ENCODE measurements at regions of chr22 and their contacts with region 1.

Region 1: DNA sequence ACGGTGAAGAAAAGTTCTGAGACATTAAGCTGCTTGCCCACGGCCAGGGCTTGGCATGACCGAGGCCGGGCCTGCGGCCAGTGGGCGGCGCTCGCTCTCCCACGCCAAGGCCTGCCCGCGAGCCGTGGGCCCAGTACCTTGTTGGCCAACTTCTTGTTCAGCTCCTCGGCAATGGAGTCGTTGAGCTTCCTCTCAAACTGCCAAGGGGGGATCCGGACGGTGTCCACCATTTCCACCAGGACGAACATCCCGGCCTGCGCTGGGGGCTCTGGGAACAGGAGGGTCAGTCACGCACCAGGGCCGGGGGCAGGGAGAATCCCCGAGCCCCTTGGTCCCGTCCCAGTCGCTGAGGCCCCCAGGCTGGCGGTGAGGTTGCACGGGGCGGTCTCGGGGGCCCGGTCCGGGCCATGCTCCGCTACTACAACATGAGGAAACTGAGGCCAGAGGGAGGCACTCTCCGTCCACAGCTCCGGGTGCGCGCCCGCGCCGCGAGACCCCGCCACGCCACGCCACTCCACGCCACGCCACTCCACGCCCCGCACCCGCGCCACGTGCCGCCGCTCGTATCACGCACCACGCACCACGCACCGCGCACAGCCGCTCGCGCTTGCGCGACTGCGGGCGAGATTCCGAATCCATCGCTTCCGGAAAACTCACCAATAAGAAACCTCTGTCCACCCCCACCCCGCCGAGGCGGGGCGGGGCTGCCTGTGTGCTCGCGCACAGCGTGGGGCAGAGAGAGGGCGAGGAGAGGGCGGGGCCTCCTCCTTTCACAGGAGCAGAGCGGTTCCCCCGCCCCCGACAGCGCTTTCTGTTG is at the start of gene POLR3H:
- DNase-seq: peak; percentile 96 to 98
- ATAC-seq: peak; percentile 91
- H3K4me3 ChIP-seq: peak within 1 kb of the TSS; percentile 78 to 90 (median 86)
- H3K27ac ChIP-seq: peak within 1 kb of the TSS; percentile 85 to 95 (median 88)
- H3K4me1 ChIP-seq: peaks cover 17 to 25% of the 10 kb centered on the region in 2 donors
- H3K27me3 ChIP-seq: no peaks in the 10 kb centered on the region
- CTCF ChIP-seq: peak; percentile 4 to 75 (median 49)
- POLR2A ChIP-seq: peak; percentile 66 to 69
- total RNA-seq, gene POLR3H: 5.7 to 11.0 (median 6.9) TPM

Region 2: GRCh38 chr22:41589391-41590241 is 45.6 kb after region 1 on chr22 and contains the start of gene PMM1:
- in situ Hi-C with region 1: no loop called
- intact Hi-C with region 1: loop called (anchors 1 kb)
- DNase-seq: peak; percentile 100
- ATAC-seq: peak; percentile 98 to 99
- H3K4me3 ChIP-seq: peak within 1 kb of the TSS; percentile 76 to 95 (median 94)
- H3K27ac ChIP-seq: peak within 1 kb of the TSS; percentile 70 to 88 (median 82)
- H3K4me1 ChIP-seq: peaks cover 0 to 17% of the 10 kb centered on the region in 2 donors
- H3K27me3 ChIP-seq: no peaks in the 10 kb centered on the region
- CTCF ChIP-seq: no peak
- POLR2A ChIP-seq: peak; percentile 84 to 92
- total RNA-seq, gene PMM1: 11.6 to 23.3 (median 16.5) TPM

Region 3: DNA sequence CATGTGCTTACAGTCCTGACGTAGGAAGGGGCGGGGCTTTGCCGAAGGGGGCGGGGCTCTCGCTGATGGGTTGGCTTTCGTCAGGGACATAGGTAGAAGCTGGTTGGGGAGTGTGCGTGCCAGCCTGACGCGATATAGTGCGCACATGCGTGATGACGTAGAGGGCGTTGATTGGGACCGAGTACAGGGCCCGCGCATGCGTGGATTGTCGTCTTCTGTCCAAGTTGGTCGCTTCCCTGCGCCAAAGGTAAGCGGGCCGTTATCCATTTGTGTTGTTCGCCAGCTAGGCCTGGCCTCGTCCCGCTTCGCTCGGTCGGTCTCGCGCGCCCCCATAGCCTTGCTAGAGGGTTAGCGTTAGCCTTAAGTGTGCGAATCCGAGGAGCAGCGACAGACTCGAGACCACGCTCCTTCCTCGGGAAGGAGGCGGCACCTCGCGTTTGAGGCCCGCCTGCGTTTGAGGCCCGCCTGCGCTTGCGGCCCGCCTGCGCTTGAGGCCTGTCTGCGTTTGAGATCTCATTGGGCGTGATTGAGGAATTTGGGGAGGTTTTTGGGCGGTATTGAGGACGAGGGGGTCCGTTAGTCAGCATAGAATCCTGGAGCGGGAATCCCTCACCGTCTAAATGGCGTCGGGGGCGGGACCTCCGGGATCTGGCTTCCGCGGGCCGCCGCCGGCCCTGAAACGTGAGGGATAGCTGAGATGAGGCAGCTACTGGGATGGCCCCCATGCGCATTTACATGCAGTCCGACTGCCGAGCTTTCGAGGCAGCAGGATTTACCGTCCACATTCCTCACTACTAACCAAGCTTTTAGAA is 77.2 kb after region 1 on chr22 and contains the start of gene XRCC6:
- in situ Hi-C with region 1: no loop called
- intact Hi-C with region 1: loop called (anchors 2 kb)
- DNase-seq: peak; percentile 100
- ATAC-seq: peak; percentile 96
- H3K4me3 ChIP-seq: peak within 1 kb of the TSS; percentile 76 to 99 (median 94)
- H3K27ac ChIP-seq: peak within 1 kb of the TSS; percentile 95 to 99 (median 97)
- H3K4me1 ChIP-seq: peaks cover 21 to 23% of the 10 kb centered on the region in 2 donors
- H3K27me3 ChIP-seq: no peaks in the 10 kb centered on the region
- CTCF ChIP-seq: no peak
- POLR2A ChIP-seq: peak; percentile 93 to 95
- total RNA-seq, gene XRCC6: 220 to 285 (median 278) TPM